ENCODE measurements at regions of chr19 and their contacts with region 1.

Region 1: DNA sequence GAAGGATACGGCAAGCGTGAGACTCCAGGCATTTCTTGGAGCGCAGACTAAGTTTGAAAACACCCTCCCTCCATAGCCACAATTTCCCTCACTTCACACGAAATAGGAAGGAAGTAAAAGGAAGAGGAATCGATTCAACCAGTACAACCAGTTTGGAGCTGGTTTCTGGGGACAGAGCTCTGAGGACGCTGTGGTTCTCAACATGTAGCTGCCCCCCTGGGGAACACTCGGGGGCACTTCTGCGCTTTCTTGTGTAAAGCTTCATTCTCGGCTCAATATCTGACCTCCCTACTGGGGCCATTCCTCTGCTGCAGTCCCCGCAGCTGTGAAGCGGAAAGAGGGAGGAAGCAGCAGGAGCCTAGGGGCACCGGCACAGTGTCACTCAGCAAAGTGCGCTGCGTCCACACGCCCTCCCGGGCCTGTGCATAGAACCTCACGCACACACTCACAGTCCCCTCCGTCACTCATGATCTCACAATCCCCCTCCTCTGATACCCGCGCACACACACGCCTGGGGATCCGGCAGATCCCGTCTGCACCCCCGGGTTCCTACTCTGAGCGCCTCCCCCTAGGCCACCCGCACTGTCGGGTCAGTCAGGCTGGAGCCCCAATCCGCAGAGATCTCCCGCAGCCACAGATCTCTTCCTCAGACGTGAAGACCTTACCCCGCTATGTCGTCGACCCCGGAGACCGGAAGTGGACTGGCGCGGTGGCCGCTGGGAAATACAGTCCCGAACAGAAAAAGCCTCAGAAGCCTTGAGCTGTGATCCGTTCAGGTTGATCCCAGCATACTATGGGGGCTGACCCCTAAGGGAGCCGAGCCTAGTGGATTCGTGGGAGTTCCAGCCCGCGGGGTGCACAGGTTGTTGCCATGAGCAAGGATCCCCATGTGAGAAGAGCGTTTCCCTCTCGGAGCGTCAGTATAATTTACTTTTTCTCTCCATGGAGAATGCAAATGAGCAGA is at the start of gene ZNF780A:
- DNase-seq: peak; percentile 92
- total RNA-seq, gene ZNF780A: 13.2 to 17.9 TPM

Region 2: DNA sequence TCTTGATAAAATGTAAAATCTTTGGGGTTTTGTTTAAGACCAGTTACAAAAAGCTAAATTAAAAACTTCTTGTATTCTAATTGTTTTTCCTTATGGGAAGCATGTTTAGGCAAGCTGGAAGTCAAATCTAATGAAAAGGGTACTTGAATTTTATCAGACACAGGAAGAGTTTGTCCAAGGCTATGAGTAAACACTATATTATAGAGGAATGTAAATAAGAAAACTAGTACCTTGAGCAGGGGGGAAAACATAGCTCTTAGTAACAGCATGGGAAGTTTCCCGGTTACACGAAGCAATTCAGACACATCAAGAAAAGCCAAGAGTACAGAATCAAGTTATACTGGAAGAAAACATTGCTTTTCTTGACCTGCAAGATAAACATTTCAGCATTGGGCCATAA is 20.0 kb after region 1 on chr19:
- intact Hi-C with region 1: loop called in 1 of 2 experiments (anchors 1 kb)
- DNase-seq: no peak

Measured in posterior vena cava (tissue), 2 donors.